ENCODE measurements at regions of chrX and their contacts with region 1.

Region 1: GRCh38 chrX:48508400-48509244 is at the start of gene PORCN:
- DNase-seq: peak; percentile 65
- ATAC-seq: peak; percentile 88
- H3K4me3 Mint-ChIP-seq: peak within 1 kb of the TSS; percentile 91
- H3K27ac Mint-ChIP-seq: peak within 1 kb of the TSS; percentile 91
- H3K4me1 Mint-ChIP-seq: peaks cover 11% of the 10 kb centered on the region
- H3K27me3 Mint-ChIP-seq: no peaks in the 10 kb centered on the region
- CTCF ChIP-seq: no peak
- total RNA-seq, gene PORCN: 7.8 and 9.8 TPM in 2 replicates

Region 2: GRCh38 chrX:48468693-48469691 is 39.6 kb before region 1 on chrX:
- CTCF ChIA-PET with region 1: interaction called, 4 read pairs
- POLR2A ChIA-PET with region 1: interaction called, 4 read pairs
- intact Hi-C with region 1: loop called (anchors 5 kb)
- DNase-seq: no peak
- ATAC-seq: peak; percentile 52
- H3K4me3 Mint-ChIP-seq: peak overlapping the region; percentile 91
- H3K27ac Mint-ChIP-seq: peak overlapping the region; percentile 69
- H3K4me1 Mint-ChIP-seq: peaks cover 12% of the 10 kb centered on the region
- H3K27me3 Mint-ChIP-seq: no peaks in the 10 kb centered on the region
- CTCF ChIP-seq: no peak

Region 3: GRCh38 chrX:48521353-48522243 is 13.0 kb after region 1 on chrX and contains the start of gene EBP:
- CTCF ChIA-PET with region 1: no interaction called
- POLR2A ChIA-PET with region 1: interaction called, 8 read pairs
- intact Hi-C with region 1: loop called (anchors 1 kb)
- DNase-seq: peak; percentile 79
- ATAC-seq: peak; percentile 96
- H3K4me3 Mint-ChIP-seq: peak within 1 kb of the TSS; percentile 86
- H3K27ac Mint-ChIP-seq: peak within 1 kb of the TSS; percentile 88
- H3K4me1 Mint-ChIP-seq: peaks cover 24% of the 10 kb centered on the region
- H3K27me3 Mint-ChIP-seq: no peaks in the 10 kb centered on the region
- CTCF ChIP-seq: no peak
- total RNA-seq, gene EBP: 72.4 and 75.5 TPM in 2 replicates